AG04450 (cell line): ENCODE measurements at regions of chr1 and their contacts with region 1.

Region 1: GRCh38 chr1:12658531-12659453 is 14.9 kb downstream of the AADACL4 start:
- DNase-seq: peak; percentile 55
- H3K4me3 ChIP-seq: no peak overlapping the region
- H3K27ac ChIP-seq: no peak overlapping the region
- H3K27me3 ChIP-seq: peaks cover 14% of the 10 kb centered on the region
- CTCF ChIP-seq: peak; percentile 94

Region 2: GRCh38 chr1:12296623-12297022 is 362.2 kb before region 1 on chr1:
- CTCF ChIA-PET with region 1: interaction called, 27 read pairs
- POLR2A ChIA-PET with region 1: no interaction called
- DNase-seq: no peak
- H3K4me3 ChIP-seq: no peak overlapping the region
- H3K27ac ChIP-seq: no peak overlapping the region
- H3K27me3 ChIP-seq: no peaks in the 10 kb centered on the region
- CTCF ChIP-seq: no peak

Region 3: DNA sequence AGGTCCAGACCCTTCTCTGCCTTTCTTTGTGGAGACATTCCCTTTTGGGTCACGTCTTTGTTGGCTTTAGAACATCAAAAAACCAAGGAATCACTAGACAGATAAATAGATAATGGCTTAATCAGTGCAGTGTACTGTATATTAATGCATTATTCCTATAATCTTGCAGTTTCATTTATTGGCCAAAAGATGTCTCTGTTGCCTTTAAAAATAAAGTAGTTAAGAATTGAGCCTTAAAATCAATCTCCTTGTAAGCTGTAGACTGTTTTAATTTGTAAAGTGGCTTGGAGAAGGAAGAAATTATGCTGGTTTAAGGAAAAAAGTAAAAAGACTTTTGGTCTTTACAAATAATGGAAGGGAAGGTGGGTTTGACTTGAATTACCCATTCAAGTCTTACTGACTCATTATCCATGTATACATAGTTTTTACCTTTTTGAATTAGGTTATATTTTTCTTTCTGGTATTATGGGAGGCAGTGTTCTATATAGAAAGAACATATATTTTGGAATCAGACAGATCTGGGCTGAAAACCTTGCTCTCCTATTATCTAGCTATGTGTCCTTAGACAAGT is 344.4 kb before region 1 on chr1:
- CTCF ChIA-PET with region 1: interaction called, 131 read pairs
- POLR2A ChIA-PET with region 1: interaction called, 4 read pairs
- DNase-seq: no peak
- H3K4me3 ChIP-seq: no peak overlapping the region
- H3K27ac ChIP-seq: no peak overlapping the region
- H3K27me3 ChIP-seq: no peaks in the 10 kb centered on the region
- CTCF ChIP-seq: peak; percentile 37

Region 4: DNA sequence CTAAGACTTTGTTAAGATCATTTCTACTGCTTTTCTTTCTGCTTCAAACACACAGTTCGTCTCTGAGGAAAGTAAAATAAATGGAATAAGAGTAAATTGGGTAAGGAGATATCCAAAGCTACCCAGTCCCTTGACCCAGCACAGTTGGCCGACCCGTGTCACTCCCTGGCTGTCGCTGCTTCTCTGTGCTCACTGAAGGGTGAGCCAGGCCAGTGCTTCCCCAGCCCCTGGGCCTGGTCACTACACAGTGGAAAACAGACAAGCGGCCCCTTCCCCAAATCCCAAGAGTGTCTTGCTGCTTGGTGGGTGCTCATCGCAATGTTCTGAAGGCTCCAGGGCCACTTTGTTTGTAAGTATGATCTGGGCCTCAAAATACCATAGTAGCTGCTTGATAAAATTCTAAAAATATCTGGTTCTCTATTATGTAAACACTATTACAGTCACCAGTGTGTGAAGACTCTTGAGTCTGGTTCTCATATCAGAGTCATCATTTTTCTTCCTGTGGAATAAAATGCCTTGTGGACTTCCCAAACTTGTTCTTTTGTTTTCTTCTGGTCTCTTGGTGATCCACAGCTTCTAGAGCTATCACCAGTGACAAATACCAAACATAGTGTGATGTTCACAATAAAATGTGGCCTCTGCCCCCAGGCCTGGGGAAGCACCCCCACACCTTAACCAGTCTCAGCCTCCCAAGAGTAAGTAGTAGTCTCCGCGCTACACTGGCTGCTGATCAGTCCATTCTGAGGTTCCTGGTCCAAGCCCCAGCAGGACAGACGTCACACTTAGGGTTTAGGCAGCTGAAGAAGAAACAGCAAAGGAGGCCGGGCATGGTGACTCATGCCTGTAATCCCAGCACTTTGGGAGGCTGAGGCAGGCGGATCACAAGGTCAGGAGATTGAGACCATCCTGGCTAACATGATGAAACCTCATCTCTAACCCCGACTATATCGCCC is 147.0 kb before region 1 on chr1:
- CTCF ChIA-PET with region 1: interaction called, 11 read pairs
- POLR2A ChIA-PET with region 1: no interaction called
- DNase-seq: no peak
- H3K4me3 ChIP-seq: no peak overlapping the region
- H3K27ac ChIP-seq: peak overlapping the region; percentile 25
- H3K27me3 ChIP-seq: no peaks in the 10 kb centered on the region
- CTCF ChIP-seq: no peak

Region 5: GRCh38 chr1:12629521-12629956 is 29.3 kb before region 1 on chr1:
- CTCF ChIA-PET with region 1: interaction called, 11 read pairs
- POLR2A ChIA-PET with region 1: no interaction called
- DNase-seq: no peak
- H3K4me3 ChIP-seq: no peak overlapping the region
- H3K27ac ChIP-seq: no peak overlapping the region
- H3K27me3 ChIP-seq: peaks cover 28% of the 10 kb centered on the region
- CTCF ChIP-seq: no peak

Region 6: DNA sequence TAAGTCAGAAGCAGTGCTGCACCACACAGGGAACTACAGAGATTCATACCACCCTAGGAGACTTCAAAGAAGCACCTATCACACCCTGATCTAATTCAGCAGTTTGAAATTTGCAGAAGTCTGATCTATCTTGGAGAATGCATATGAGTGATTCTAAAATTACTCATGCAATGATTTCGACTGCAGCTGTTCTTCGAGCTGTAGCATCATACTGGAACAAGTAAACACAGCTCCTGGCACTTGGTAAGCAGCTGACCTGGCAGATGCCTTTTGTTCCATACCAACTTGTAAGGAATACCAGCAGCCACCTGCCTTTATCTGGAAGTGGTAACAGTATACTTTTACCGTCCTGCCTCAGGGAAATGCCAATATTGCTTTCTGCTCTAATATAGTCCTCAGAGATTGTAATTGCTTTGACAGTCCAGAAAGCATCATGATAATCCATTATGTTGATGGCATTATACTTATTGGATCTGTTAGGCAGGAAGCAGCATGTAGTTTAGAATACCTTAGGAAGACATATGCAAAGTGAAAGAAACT is 10.8 kb after region 1 on chr1:
- CTCF ChIA-PET with region 1: interaction called, 33 read pairs
- POLR2A ChIA-PET with region 1: no interaction called
- DNase-seq: no peak
- H3K4me3 ChIP-seq: no peak overlapping the region
- H3K27ac ChIP-seq: no peak overlapping the region
- H3K27me3 ChIP-seq: no peaks in the 10 kb centered on the region
- CTCF ChIP-seq: no peak